Common myeloid progenitor, CD34-positive (primary cell): ENCODE measurements at regions of chr11 and their contacts with region 1.

Region 1: GRCh38 chr11:6389921-6390724 is at the start of gene SMPD1:
- DNase-seq: peak; percentile 88 to 96 (median 95)
- H3K4me3 ChIP-seq: peak within 1 kb of the TSS; percentile 20 to 91 (median 75)
- H3K27ac ChIP-seq: peak within 1 kb of the TSS; percentile 25 to 76
- H3K4me1 ChIP-seq: peaks cover 5 to 23% (median 17%) of the 10 kb centered on the region in 4 experiments
- H3K27me3 ChIP-seq: no peaks in the 10 kb centered on the region

Region 2: GRCh38 chr11:6200975-6201374 is 189.1 kb before region 1 on chr11:
- CTCF ChIA-PET with region 1: no interaction called
- POLR2A ChIA-PET with region 1: no interaction called
- DNase-seq: peak; percentile 14 to 70 (median 65)
- H3K4me3 ChIP-seq: no peak overlapping the region
- H3K27ac ChIP-seq: no peak overlapping the region
- H3K4me1 ChIP-seq: peaks cover 0 to 11% (median 6%) of the 10 kb centered on the region in 4 experiments
- H3K27me3 ChIP-seq: peaks cover 0 to 2% (median 0%) of the 10 kb centered on the region in 5 experiments

Region 3: GRCh38 chr11:6365659-6366058 is 24.5 kb before region 1 on chr11:
- CTCF ChIA-PET with region 1: no interaction called
- POLR2A ChIA-PET with region 1: no interaction called
- DNase-seq: no peak
- H3K4me3 ChIP-seq: no peak overlapping the region
- H3K27ac ChIP-seq: no peak overlapping the region
- H3K4me1 ChIP-seq: no peaks in the 10 kb centered on the region
- H3K27me3 ChIP-seq: no peaks in the 10 kb centered on the region

Region 4: DNA sequence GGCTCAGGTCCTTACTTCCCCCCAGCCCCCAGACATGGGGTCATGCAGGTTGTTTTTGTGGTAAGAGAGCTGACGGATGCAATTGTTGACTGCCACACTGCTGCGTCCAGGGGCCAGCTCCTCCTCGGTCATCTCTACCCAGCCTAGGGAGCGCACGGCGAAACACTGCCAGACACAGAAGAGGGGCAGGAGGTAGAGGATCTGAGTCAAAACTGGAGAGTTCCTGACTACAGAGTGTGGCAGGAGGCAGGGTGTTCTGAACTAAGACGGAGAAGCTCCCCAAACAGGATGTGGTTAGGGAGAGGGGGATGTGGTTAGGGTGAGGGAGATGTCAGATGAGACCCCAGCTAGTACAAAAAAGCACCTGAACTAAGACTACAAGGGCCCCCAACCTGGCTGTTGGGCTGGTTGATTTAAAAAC is 12.4 kb after region 1 on chr11:
- CTCF ChIA-PET with region 1: interaction called, 11 read pairs
- POLR2A ChIA-PET with region 1: interaction called, 5 read pairs
- DNase-seq: peak in 2 of 3 donors; percentile 81 to 84
- H3K4me3 ChIP-seq: peak overlapping the region in 4 of 7 experiments; percentile 25 to 40 (median 34)
- H3K27ac ChIP-seq: peak overlapping the region in 1 of 2 experiments; percentile 10
- H3K4me1 ChIP-seq: peaks cover 0 to 29% (median 25%) of the 10 kb centered on the region in 4 experiments
- H3K27me3 ChIP-seq: no peaks in the 10 kb centered on the region